ENCODE measurements at regions of chr3 and their contacts with region 1.

Region 1: GRCh38 chr3:98022978-98023820 is 11.9 kb downstream of the GABRR3 start:
- DNase-seq: peak; percentile 78

Region 2: DNA sequence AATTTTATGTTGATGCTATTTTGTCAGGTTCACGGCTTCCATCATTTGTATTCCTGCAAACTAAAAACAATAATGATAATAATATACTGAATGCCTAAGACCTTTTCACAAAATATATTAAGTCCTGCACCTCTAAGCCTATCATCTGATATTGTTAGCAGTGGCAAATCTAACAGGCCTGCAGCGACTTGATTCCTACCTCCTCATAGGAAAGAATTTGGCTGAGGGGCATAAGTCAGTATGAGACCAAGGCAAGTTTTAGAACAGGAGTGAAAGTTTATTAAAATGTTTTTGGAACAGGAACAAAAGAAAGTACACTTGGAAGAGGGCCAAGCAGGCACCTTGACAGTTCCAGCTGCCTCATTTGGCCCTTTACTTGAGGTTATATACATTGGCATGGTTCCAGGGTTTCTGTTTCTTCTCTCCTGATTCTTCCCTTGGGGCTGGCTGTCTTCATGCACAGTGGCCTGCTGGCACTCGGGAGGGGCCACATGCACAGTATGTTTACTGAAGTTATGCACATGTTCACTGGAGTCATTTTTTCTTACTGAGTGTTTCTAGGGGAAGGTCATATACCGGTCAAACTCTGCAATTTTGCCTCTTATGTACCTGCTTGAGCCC is 790.7 kb before region 1 on chr3:
- in situ Hi-C with region 1: no loop called
- DNase-seq: no peak

Region 3: GRCh38 chr3:97793420-97794019 is 229.7 kb before region 1 on chr3:
- in situ Hi-C with region 1: loop called (anchors 10 kb)
- DNase-seq: peak; percentile 79

Region 4: GRCh38 chr3:99430348-99431134 is 1407.3 kb after region 1 on chr3:
- in situ Hi-C with region 1: no loop called
- DNase-seq: no peak

Measured in KBM-7 (cell line).